Transverse colon (tissue), 4 donors: ENCODE measurements at regions of chr2 and their contacts with region 1.

Region 1: GRCh38 chr2:165698444-165698894 is 95.6 kb downstream of the GALNT3 start:
- DNase-seq: peak; percentile 29
- H3K4me3 ChIP-seq: no peak overlapping the region
- H3K27ac ChIP-seq: no peak overlapping the region
- H3K4me1 ChIP-seq: peaks cover 0 to 4% (median 0%) of the 10 kb centered on the region in 4 donors
- H3K27me3 ChIP-seq: no peaks in the 10 kb centered on the region
- CTCF ChIP-seq: peak; percentile 32 to 50 (median 39)
- EP300 ChIP-seq: no peak
- POLR2A ChIP-seq: no peak

Region 2: DNA sequence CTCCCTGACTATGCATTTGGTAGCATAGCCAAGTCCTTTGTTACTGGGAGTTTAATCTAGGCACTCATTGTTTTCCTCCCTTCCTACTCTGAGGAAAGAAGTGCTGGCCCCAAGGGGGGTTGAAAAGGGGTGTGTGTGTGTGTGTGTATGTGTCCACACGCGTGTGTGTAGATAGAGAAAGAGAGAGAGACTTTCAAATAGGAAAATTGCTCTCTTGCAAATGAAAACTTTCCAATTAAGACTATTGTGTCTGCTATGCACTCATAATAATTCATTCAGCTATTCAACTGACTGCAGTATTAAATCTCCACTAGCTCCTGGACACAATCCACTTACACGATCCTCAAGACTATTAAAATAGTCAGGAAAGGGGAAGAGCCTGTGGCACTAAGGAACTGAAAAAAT is 321.9 kb before region 1 on chr2:
- in situ Hi-C with region 1: loop called in 1 of 4 experiments (anchors 25 kb)
- intact Hi-C with region 1: no loop called
- DNase-seq: no peak
- H3K4me3 ChIP-seq: no peak overlapping the region
- H3K27ac ChIP-seq: no peak overlapping the region
- H3K4me1 ChIP-seq: no peaks in the 10 kb centered on the region
- H3K27me3 ChIP-seq: no peaks in the 10 kb centered on the region
- CTCF ChIP-seq: no peak
- EP300 ChIP-seq: no peak
- POLR2A ChIP-seq: no peak

Region 3: DNA sequence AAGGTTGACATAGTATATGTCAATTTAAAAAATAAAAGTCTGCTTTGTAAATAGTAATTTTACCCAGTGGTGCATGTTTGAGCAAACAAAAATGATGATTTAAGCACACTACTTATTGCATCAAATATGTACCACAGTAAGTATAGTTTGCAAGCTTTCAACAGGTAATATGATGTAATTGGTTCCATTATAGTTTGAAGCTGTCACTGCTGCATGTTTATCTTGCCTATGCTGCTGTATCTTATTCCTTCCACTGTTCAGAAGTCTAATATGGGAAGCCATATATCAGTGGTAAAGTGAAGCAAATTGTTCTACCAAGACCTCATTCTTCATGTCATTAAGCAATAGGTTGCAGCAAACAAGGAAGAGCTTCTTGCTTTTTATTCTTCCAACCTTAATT is 307.6 kb before region 1 on chr2:
- in situ Hi-C with region 1: loop called in 2 of 4 experiments (anchors 5 to 25 kb)
- intact Hi-C with region 1: no loop called
- DNase-seq: no peak
- H3K4me3 ChIP-seq: no peak overlapping the region
- H3K27ac ChIP-seq: no peak overlapping the region
- H3K4me1 ChIP-seq: no peaks in the 10 kb centered on the region
- H3K27me3 ChIP-seq: no peaks in the 10 kb centered on the region
- CTCF ChIP-seq: no peak
- EP300 ChIP-seq: no peak
- POLR2A ChIP-seq: no peak

Region 4: DNA sequence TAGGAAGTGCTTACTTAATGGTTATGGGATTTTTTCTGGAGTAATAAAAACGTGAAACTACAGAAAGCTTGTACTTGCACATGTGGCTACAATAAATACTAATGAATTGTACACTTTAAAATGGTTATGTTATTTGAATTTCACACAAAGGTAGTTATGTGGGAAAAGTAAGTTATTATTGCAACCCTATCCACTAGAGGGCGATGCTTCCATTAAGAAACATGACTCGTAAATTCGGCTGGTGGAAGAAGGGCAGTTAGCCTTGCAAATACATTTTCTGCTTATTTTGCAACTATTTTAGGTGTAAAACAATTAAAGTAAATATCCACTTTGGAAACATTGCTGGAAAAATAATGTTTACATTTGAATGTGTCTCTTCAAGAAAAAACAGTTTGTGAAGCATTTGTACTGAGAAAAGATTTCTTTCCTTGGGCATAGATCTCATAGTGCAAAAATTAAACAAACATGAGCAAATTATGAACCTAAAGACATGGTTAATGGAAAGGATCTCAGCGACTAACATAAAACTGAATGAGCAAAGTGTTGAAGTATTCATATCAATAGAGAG is 297.1 kb before region 1 on chr2:
- in situ Hi-C with region 1: loop called in 3 of 4 experiments (anchors 10 to 25 kb)
- intact Hi-C with region 1: loop called (anchors 2 kb)
- DNase-seq: no peak
- H3K4me3 ChIP-seq: no peak overlapping the region
- H3K27ac ChIP-seq: no peak overlapping the region
- H3K4me1 ChIP-seq: peaks cover 0 to 5% (median 0%) of the 10 kb centered on the region in 4 donors
- H3K27me3 ChIP-seq: no peaks in the 10 kb centered on the region
- CTCF ChIP-seq: peak; percentile 63 to 72 (median 67)
- EP300 ChIP-seq: no peak
- POLR2A ChIP-seq: no peak